Natural killer cell (primary cell): ENCODE measurements at regions of chr17 and their contacts with region 1.

Region 1: DNA sequence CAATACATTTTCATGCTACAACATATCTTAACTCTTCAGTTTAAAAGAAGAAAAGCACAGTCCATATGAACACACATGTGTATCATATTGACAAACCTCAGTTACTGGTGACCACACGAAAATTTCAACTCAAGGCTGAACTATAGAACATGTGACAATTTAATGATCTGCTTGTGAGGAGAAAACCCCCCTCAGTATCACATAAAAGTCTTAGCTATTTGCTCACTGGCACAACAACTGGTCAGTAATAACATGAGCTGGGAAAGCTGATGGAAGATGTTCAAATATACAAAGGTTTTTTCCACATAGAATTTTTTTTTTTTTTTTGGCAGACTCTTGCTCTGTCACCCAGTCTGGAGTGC is 19.5 kb downstream of the ZNF652 start:
- DNase-seq: no peak
- ATAC-seq: peak; percentile 37 to 47 (median 38)
- H3K4me3 ChIP-seq: peak overlapping the region; percentile 14
- H3K4me3 Mint-ChIP-seq: peak overlapping the region; percentile 63
- H3K27ac ChIP-seq: peak overlapping the region; percentile 87
- H3K27ac Mint-ChIP-seq: peak overlapping the region; percentile 76 to 79
- H3K4me1 ChIP-seq: peaks cover 81% of the 10 kb centered on the region
- H3K4me1 Mint-ChIP-seq: peaks cover 41 to 46% of the 10 kb centered on the region in 2 donors
- H3K27me3 ChIP-seq: no peaks in the 10 kb centered on the region
- H3K27me3 Mint-ChIP-seq: no peaks in the 10 kb centered on the region
- CTCF ChIP-seq: no peak

Region 2: GRCh38 chr17:49315551-49316257 is 26.9 kb before region 1 on chr17:
- intact Hi-C with region 1: loop called (anchors 1 kb)
- DNase-seq: peak; percentile 66 to 91
- ATAC-seq: peak; percentile 99
- H3K4me3 ChIP-seq: peak overlapping the region; percentile 21
- H3K4me3 Mint-ChIP-seq: peak overlapping the region; percentile 83
- H3K27ac ChIP-seq: peak overlapping the region; percentile 26
- H3K27ac Mint-ChIP-seq: peak overlapping the region; percentile 10 to 72
- H3K4me1 ChIP-seq: peaks cover 15% of the 10 kb centered on the region
- H3K4me1 Mint-ChIP-seq: peaks cover 25 to 32% of the 10 kb centered on the region in 2 donors
- H3K27me3 ChIP-seq: no peaks in the 10 kb centered on the region
- H3K27me3 Mint-ChIP-seq: no peaks in the 10 kb centered on the region
- CTCF ChIP-seq: peak; percentile 95

Region 3: GRCh38 chr17:49361902-49362722 is 19.6 kb after region 1 on chr17 and contains the start of gene ZNF652:
- intact Hi-C with region 1: loop called (anchors 1 kb)
- DNase-seq: peak; percentile 82 to 97
- ATAC-seq: peak; percentile 62 to 84 (median 68)
- H3K4me3 ChIP-seq: peak within 1 kb of the TSS; percentile 91
- H3K4me3 Mint-ChIP-seq: peak within 1 kb of the TSS; percentile 91
- H3K27ac ChIP-seq: peak within 1 kb of the TSS; percentile 78
- H3K27ac Mint-ChIP-seq: peak within 1 kb of the TSS; percentile 90 to 97
- H3K4me1 ChIP-seq: peaks cover 44% of the 10 kb centered on the region
- H3K4me1 Mint-ChIP-seq: peaks cover 57 to 58% of the 10 kb centered on the region in 2 donors
- H3K27me3 ChIP-seq: no peaks in the 10 kb centered on the region
- H3K27me3 Mint-ChIP-seq: no peaks in the 10 kb centered on the region
- CTCF ChIP-seq: no peak
- total RNA-seq, gene ZNF652: 53.8 to 79.1 (median 73.3) TPM